Activated CD4-positive, alpha-beta T cell treated with anti-CD3 and anti-CD28 coated beads, Interleukin-2, amount 10 ng/mL, durations not matched to agents 7 days and 5 days (primary cell): ENCODE measurements at regions of chr16 and their contacts with region 1.

Region 1: DNA sequence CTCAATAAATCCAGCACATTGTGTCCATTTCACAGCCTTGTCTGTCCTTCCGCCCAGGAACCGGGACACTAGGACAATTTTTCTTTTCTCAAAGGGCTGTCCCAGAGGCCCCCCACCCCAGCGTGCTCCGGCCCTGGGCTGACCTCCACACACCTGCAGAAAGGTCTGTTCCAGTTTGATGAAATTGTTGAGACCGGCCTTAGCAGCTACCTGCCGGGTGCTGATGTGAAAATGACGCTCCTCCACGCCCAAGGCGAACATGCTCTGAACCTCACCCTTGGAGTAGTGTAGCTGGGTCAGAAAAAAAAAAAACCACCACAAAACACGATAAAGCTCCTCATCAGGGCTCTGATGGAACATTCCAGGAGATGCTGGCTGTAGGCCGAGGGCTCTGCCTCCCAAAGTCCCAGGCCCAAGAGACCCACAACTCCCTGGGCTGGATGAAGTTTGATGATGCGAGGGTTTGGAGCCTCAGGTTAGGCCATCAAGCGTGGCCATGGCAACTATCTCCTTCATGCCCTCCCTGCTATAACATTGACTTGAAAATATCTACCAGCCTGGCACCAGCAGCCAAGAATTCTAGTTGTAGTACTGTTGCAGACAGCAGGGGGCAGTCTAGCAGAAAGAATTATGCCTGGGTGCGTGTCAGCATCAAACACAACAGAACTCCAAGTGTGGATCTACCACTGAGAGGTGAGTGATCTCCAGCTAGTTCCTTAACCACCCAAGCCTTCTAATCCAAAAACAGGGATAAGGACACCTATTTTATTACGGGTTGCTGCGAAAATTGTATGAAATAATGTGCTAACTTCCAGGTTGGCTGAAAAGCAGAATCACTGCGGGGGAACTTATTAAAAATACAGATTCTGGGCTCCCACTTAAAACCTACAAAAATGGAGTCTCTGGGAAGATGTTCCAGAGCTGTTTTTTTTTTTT is 62.1 kb downstream of the RMI2 start:
- DNase-seq: peak; percentile 76
- H3K4me3 Mint-ChIP-seq: no peak overlapping the region
- H3K27ac Mint-ChIP-seq: no peak overlapping the region
- H3K4me1 Mint-ChIP-seq: peaks cover 4% of the 10 kb centered on the region
- H3K27me3 Mint-ChIP-seq: no peaks in the 10 kb centered on the region

Region 2: GRCh38 chr16:11386791-11387546 is 20.3 kb before region 1 on chr16:
- CTCF ChIA-PET with region 1: interaction called, 18 read pairs
- POLR2A ChIA-PET with region 1: no interaction called
- DNase-seq: no peak
- H3K4me3 Mint-ChIP-seq: no peak overlapping the region
- H3K27ac Mint-ChIP-seq: no peak overlapping the region
- H3K4me1 Mint-ChIP-seq: peaks cover 21% of the 10 kb centered on the region
- H3K27me3 Mint-ChIP-seq: no peaks in the 10 kb centered on the region

Region 3: DNA sequence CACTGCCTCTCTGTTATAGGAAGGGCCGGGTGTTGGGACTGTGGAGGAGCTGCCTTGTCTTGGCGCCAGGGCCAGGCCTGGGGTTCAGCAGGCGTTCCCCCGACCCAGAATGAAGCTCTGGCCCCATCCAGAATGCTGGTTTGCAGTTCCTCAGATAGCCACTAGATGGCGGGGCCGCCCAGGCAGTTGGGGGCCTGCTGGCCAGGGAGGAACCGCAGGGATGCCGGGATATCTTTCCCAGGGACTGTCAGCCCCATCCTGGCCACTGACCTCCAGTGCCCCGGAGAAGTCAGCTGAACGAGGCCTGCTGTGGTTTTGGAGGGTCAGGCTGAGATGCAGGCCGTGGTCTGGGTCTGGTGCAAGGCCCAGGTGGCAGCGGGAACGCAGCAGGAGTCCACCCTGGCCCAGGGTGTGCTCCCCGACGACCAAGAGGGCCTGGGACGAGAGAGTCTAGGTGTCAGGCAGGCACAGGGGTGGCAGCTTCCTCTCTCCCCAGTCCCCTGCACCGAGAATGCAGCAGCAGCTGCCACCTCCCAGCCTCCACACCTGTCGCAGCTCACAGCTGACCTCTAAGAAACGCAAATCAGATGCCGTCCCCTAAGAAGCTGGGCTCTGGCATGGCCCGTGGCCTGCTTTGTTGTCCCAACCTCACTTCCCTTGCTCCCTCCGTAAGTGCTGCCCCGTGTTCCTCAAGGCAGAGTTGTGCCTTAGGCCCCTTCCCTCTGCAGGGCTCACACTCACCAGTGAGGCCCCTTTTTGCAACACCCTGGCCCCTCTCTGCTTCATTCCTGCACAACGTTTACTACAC is 10.9 kb before region 1 on chr16:
- CTCF ChIA-PET with region 1: interaction called, 20 read pairs
- POLR2A ChIA-PET with region 1: no interaction called
- DNase-seq: peak; percentile 68
- H3K4me3 Mint-ChIP-seq: no peak overlapping the region
- H3K27ac Mint-ChIP-seq: no peak overlapping the region
- H3K4me1 Mint-ChIP-seq: no peaks in the 10 kb centered on the region
- H3K27me3 Mint-ChIP-seq: no peaks in the 10 kb centered on the region

Region 4: GRCh38 chr16:11423315-11424117 is 16.2 kb after region 1 on chr16:
- CTCF ChIA-PET with region 1: interaction called, 17 read pairs
- POLR2A ChIA-PET with region 1: no interaction called
- DNase-seq: no peak
- H3K4me3 Mint-ChIP-seq: no peak overlapping the region
- H3K27ac Mint-ChIP-seq: no peak overlapping the region
- H3K4me1 Mint-ChIP-seq: peaks cover 3% of the 10 kb centered on the region
- H3K27me3 Mint-ChIP-seq: peaks cover 4% of the 10 kb centered on the region

Region 5: DNA sequence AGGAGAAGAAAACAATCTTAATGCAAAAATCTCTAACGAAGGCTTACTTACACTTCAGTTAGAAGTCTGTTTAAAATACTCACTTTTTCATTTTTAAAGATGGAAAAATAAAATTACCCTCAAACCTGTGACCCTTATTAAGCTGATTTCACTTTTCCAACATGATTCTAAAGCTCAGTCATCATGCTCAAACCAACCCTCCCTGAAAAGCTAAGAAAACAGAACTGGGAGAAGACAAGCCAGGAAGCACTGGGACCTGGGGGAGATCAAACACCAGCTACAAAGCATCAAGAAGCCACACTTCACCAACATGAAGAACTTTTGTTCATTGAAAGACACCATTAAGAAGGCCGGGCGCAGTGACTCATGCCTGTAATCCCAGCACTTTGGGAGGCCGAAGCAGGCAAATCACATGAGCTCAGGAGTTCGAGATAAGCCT is 90.6 kb after region 1 on chr16:
- CTCF ChIA-PET with region 1: no interaction called
- POLR2A ChIA-PET with region 1: interaction called, 11 read pairs
- DNase-seq: no peak
- H3K4me3 Mint-ChIP-seq: no peak overlapping the region
- H3K27ac Mint-ChIP-seq: peak overlapping the region; percentile 54
- H3K4me1 Mint-ChIP-seq: peaks cover 40% of the 10 kb centered on the region
- H3K27me3 Mint-ChIP-seq: no peaks in the 10 kb centered on the region